ENCODE measurements at regions of chr18 and their contacts with region 1.

Region 1: DNA sequence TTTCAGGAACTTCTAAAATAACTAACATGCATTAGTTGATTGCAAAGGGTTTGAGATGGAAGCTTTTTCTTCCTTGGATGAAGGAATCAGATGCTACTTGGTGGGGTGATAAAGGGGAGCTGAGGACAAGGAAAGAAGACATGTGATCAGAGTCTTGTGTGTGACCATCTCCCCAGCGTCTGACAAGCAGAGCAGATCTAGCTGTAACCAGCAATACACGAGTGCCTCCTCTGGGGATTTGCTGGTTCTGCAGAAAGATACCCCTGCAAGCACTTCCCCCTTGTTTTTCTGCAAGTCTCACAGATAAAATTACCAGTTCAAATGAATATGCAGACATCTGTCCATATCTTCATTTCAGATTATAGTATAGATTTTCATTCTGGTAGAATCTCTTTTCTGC is 2.7 kb downstream of the CDH7 start:
- DNase-seq: no peak
- ATAC-seq: peak; percentile 87
- H3K4me3 ChIP-seq: no peak overlapping the region
- H3K27ac ChIP-seq: no peak overlapping the region
- H3K4me1 ChIP-seq: no peaks in the 10 kb centered on the region
- H3K27me3 ChIP-seq: peaks cover 0 to 2% of the 10 kb centered on the region in 2 experiments; a peak in 2 of 4 replicates
- CTCF ChIP-seq: peak; percentile 25 to 51 (median 50); a peak in 5 of 6 replicates
- EP300 ChIP-seq: no peak
- POLR2A ChIP-seq: no peak
- RAD21 ChIP-seq: 0 out of 2 replicates have a peak, but pooled peaks have one; percentile 11

Region 2: DNA sequence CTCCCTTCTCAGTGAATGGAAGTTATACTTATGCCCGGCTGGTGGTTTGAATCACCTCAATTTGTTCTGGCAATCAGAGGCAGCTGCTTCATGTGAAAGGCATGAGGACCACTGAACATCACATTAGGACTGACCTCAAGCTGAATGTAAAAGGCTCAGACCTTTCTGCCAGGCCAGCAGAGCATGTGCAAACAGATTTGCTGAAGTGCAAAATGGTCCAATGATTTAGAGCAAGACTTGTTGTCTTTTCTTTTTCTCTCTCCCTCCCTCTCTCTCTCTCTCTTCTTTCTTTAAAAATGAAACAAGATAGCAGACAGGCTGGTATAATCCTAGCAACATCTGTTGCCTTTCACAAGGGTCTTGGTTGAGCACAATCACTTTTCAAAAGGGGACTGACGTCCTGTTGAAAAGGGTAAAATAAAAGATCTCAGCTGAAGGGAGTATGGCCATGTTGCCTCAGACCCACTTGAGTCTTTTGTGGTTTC is 16.0 kb before region 1 on chr18:
- CTCF ChIA-PET with region 1: interaction called, 19 read pairs
- POLR2A ChIA-PET with region 1: no interaction called
- RAD21 ChIA-PET with region 1: no interaction called
- SMC1A ChIA-PET with region 1: interaction called, 3 read pairs
- in situ Hi-C with region 1: no loop called
- intact Hi-C with region 1: no loop called
- DNase-seq: no peak
- ATAC-seq: no peak
- H3K4me3 ChIP-seq: no peak overlapping the region
- H3K27ac ChIP-seq: no peak overlapping the region
- H3K4me1 ChIP-seq: no peaks in the 10 kb centered on the region
- H3K27me3 ChIP-seq: no peaks in the 10 kb centered on the region
- CTCF ChIP-seq: no peak
- EP300 ChIP-seq: no peak
- POLR2A ChIP-seq: no peak
- RAD21 ChIP-seq: no peak

Region 3: GRCh38 chr18:65768379-65768778 is 14.9 kb after region 1 on chr18:
- CTCF ChIA-PET with region 1: interaction called, 3 read pairs
- POLR2A ChIA-PET with region 1: no interaction called
- RAD21 ChIA-PET with region 1: interaction called, 3 read pairs
- SMC1A ChIA-PET with region 1: interaction called, 10 read pairs
- in situ Hi-C with region 1: no loop called
- intact Hi-C with region 1: no loop called
- DNase-seq: no peak
- ATAC-seq: no peak
- H3K4me3 ChIP-seq: no peak overlapping the region
- H3K27ac ChIP-seq: no peak overlapping the region
- H3K4me1 ChIP-seq: no peaks in the 10 kb centered on the region
- H3K27me3 ChIP-seq: no peaks in the 10 kb centered on the region
- CTCF ChIP-seq: no peak
- EP300 ChIP-seq: no peak
- POLR2A ChIP-seq: no peak
- RAD21 ChIP-seq: no peak

Region 4: DNA sequence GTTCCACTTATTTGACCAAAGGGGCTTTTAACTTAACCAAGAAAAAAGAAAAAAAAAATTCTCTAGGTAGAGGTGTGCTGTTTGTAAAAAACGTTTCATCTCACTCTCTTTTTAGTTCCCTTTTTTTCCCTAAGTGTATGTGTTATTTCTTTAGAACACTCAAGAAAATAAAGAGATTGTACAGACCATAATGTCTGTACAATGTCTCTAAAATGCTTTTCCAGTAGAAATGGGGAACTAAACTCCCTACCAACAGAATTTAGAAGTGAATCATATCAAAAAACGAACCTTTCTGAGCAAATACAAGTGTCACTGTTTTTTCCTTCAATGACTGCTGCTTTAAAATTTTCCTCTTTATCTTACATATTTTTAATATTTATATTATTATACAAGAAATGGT is 69.3 kb after region 1 on chr18:
- CTCF ChIA-PET with region 1: no interaction called
- POLR2A ChIA-PET with region 1: no interaction called
- RAD21 ChIA-PET with region 1: no interaction called
- SMC1A ChIA-PET with region 1: no interaction called
- in situ Hi-C with region 1: no loop called
- intact Hi-C with region 1: no loop called
- DNase-seq: no peak
- ATAC-seq: no peak
- H3K4me3 ChIP-seq: no peak overlapping the region
- H3K27ac ChIP-seq: no peak overlapping the region
- H3K4me1 ChIP-seq: no peaks in the 10 kb centered on the region
- H3K27me3 ChIP-seq: no peaks in the 10 kb centered on the region
- CTCF ChIP-seq: no peak
- EP300 ChIP-seq: no peak
- POLR2A ChIP-seq: no peak
- RAD21 ChIP-seq: no peak